ENCODE measurements at regions of chr17 and their contacts with region 1.

Region 1: DNA sequence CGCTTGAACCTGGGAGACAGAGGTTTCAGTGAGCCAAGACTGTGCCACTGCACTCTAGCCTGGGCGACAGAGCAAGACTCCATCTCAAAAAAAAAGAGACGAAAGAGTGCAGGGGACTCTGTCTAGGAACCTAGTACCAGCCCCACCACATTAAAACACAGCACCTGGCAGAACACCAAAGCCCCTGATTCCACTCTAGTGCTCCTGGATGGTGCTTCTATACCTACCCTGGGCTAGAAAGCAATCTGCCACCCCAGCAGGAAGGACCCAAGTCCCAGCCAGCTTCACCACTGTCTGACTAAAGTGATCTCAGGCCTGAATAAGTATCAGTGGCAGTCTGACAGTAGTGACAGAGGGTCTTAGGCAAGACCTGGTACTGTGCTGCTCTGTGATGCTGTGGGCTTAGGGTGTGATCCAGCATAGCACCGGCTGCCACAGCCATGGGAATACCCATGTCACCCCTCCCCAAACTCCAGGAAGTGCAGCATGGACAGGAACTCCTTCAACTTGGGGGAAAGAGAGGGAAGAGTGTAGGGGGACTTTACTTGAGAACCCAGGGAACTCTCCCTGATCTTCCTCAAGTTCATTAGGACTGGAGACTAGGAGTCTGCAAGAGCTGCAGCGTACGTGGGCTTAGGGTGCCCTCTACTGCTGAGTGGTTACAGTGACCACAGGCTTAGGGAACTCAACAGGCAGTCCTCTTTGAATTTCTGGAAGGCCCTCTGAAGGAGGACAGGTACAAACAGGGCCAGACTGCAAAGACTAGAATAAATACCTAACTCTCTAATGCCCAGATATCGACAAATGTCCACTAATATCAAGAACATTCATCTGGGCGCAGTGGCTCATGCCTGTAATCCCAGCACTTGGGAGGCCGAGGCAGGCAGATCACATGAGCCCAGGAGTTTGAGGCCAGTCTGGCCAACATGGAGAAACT is 30.0 kb upstream of the RNF43 start:
- DNase-seq: peak; percentile 33 to 79 (median 72)
- ATAC-seq: peak; percentile 100
- H3K4me3 ChIP-seq: no peak overlapping the region
- H3K27ac ChIP-seq: no peak overlapping the region
- H3K4me1 ChIP-seq: no peaks in the 10 kb centered on the region
- H3K27me3 ChIP-seq: peaks cover 0 to 3% of the 10 kb centered on the region in 2 donors
- CTCF ChIP-seq: peak; percentile 63

Region 2: GRCh38 chr17:57803025-57803424 is 644.3 kb before region 1 on chr17:
- intact Hi-C with region 1: no loop called
- DNase-seq: no peak
- ATAC-seq: no peak
- H3K4me3 ChIP-seq: no peak overlapping the region
- H3K27ac ChIP-seq: no peak overlapping the region
- H3K4me1 ChIP-seq: no peaks in the 10 kb centered on the region
- H3K27me3 ChIP-seq: no peaks in the 10 kb centered on the region
- CTCF ChIP-seq: no peak

Region 3: DNA sequence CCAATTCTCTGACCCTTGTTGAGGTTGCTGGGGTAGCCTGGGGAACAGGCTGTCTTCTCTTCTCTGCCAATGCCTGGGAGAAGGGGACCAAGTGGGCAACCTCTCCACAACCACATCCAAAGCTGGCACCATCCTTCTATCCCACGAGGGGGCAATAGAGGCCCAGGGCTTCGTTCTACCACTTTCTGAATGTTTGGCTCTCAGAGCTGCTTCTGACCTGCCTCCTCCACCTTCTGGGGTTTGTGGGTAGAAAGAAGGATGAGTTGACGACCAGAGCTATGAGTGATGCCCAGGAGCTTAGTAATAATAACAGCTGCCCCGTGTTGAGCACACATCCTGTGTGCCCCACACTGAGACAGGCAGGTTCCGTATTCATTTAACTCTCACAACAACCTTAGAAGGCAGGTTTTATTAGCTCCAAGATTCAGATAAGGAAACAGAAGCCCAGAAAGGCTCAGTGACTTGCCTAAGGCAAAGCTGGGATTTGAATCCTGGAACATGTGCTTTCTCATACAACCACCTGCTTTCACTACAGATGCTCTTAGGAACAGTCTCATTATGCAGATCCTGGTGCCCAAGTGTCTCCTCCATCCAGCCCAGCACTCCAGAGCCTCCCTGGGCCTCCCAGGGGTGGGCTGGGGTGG is 129.8 kb before region 1 on chr17:
- intact Hi-C with region 1: loop called in 1 of 2 experiments (anchors 10 kb)
- DNase-seq: no peak
- ATAC-seq: peak; percentile 85
- H3K4me3 ChIP-seq: no peak overlapping the region
- H3K27ac ChIP-seq: no peak overlapping the region
- H3K4me1 ChIP-seq: peaks cover 0 to 5% of the 10 kb centered on the region in 2 donors
- H3K27me3 ChIP-seq: no peaks in the 10 kb centered on the region
- CTCF ChIP-seq: peak; percentile 50 to 68